ENCODE measurements at regions of chr14 and their contacts with region 1.

Region 1: GRCh38 chr14:58107947-58108552 is 44.0 kb downstream of the ARMH4 start:
- DNase-seq: peak in 1 of 6 donors; percentile 45
- ATAC-seq: peak in 3 of 4 donors; percentile 72 to 82 (median 78)
- H3K4me3 ChIP-seq: no peak overlapping the region
- H3K27ac ChIP-seq: no peak overlapping the region
- H3K4me1 ChIP-seq: no peaks in the 10 kb centered on the region
- H3K27me3 ChIP-seq: no peaks in the 10 kb centered on the region
- CTCF ChIP-seq: peak; percentile 8 to 56 (median 49)

Region 2: GRCh38 chr14:57848353-57848752 is 259.7 kb before region 1 on chr14:
- intact Hi-C with region 1: no loop called
- DNase-seq: no peak
- ATAC-seq: no peak
- H3K4me3 ChIP-seq: no peak overlapping the region
- H3K27ac ChIP-seq: no peak overlapping the region
- H3K4me1 ChIP-seq: no peaks in the 10 kb centered on the region
- H3K27me3 ChIP-seq: no peaks in the 10 kb centered on the region
- CTCF ChIP-seq: no peak

Region 3: GRCh38 chr14:58166005-58166983 is 58.2 kb after region 1 on chr14:
- intact Hi-C with region 1: loop called in 1 of 3 experiments (anchors 5 kb)
- DNase-seq: peak; percentile 54 to 95 (median 82)
- ATAC-seq: peak; percentile 62 to 89 (median 86)
- H3K4me3 ChIP-seq: no peak overlapping the region
- H3K27ac ChIP-seq: no peak overlapping the region
- H3K4me1 ChIP-seq: no peaks in the 10 kb centered on the region
- H3K27me3 ChIP-seq: no peaks in the 10 kb centered on the region
- CTCF ChIP-seq: peak; percentile 74 to 91 (median 83)

Region 4: DNA sequence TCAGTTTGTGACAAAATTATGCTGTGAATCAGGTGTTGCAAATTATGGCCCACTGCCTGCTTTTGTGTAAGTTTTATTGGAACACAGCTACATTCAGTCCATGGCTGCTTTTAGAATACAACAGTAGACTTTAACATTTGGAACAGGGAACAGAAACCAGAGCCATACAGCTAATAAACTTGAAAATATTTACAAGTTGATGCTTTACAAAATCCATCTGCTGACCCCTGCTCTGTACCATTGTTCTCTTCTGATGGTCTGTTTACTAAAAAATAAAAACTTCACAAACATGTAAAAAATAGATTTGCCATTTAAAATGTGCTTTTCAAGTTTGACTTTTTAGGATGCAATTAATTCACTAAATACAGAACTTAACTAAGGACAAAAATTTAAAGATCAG is 157.4 kb after region 1 on chr14:
- intact Hi-C with region 1: no loop called
- DNase-seq: no peak
- ATAC-seq: no peak
- H3K4me3 ChIP-seq: no peak overlapping the region
- H3K27ac ChIP-seq: no peak overlapping the region
- H3K4me1 ChIP-seq: no peaks in the 10 kb centered on the region
- H3K27me3 ChIP-seq: no peaks in the 10 kb centered on the region
- CTCF ChIP-seq: no peak

Region 5: GRCh38 chr14:58362798-58363412 is 254.9 kb after region 1 on chr14:
- intact Hi-C with region 1: loop called in 1 of 3 experiments (anchors 10 kb)
- DNase-seq: no peak
- ATAC-seq: peak in 3 of 4 donors; percentile 72 to 81 (median 75)
- H3K4me3 ChIP-seq: no peak overlapping the region
- H3K27ac ChIP-seq: no peak overlapping the region
- H3K4me1 ChIP-seq: no peaks in the 10 kb centered on the region
- H3K27me3 ChIP-seq: no peaks in the 10 kb centered on the region
- CTCF ChIP-seq: peak in 1 of 4 donors; percentile 8

Measured in pancreas (tissue), 10 donors.